ENCODE measurements at regions of chr12 and their contacts with region 1.

Region 1: DNA sequence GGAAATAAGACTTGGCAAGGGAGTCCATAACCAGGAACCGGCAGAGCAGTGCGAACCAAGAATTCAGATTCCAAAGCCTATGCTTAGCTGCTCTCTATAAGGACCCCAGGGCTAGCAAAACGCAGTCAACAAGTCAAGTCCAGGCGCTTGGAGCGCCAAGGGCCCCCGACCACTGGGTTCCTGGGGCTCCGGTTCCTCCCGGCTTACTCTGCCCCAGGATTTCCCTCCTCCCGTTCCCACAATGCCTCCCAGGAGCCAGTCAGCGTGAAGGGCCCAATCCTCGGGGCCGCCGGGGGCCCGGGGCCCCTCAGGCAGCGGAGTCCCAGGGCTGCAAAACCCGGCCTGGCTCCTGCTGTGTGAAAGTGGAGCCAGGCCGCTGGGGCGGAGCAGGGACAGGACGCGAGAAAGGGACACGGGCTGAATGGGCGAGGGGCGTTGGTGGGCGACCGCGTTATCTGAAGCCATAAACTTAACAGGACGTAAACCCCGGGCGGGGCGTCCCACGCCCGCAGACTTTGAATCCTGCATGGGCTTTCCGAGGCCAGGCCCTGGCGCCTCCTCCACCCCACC is 1.5 kb downstream of the KRT8 start:
- DNase-seq: no peak
- H3K27ac ChIP-seq: peak overlapping the region; percentile 96
- CTCF ChIP-seq: no peak

Region 2: DNA sequence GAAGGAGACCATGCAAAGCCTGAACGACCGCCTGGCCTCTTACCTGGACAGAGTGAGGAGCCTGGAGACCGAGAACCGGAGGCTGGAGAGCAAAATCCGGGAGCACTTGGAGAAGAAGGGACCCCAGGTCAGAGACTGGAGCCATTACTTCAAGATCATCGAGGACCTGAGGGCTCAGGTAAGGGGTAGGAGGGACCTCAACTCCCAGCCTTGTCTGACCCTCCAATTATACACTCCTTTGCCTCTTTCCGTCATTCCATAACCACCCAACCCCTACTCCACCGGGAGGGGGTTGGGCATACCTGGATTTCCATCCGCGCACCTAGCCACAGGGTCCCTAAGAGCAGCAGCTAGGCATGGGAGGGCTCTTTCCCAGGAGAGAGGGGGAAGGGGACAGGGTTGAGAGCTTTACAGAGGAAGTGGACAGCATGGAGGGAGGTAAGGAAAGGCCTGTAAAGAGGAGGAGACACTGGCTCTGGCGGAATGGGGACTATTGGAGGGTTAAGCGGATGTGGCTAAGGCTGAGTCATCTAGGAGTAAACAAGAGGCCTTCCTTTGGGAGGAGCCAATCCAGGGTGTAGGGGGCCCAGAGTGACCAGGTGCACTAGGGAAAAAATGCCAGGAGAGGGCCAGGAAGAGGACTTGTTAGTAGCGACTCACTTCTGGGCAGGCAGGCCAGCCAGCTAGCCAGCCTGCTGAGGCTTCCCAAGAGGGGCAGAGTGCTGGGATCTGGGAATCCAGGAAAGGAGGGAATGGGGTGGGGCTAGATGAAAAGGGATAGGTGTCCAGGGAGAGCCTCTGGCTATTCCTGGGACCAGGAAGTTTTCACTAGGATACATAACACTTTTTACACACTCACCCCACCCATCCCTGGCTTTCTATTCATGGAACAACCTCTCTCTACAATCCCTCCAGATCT is 46.3 kb after region 1 on chr12:
- CTCF ChIA-PET with region 1: interaction called, 6 read pairs
- POLR2A ChIA-PET with region 1: interaction called, 17 read pairs
- DNase-seq: peak; percentile 95
- H3K27ac ChIP-seq: peak overlapping the region; percentile 92
- CTCF ChIP-seq: no peak

Measured in RWPE1 (cell line).